HEK293T (cell line): ENCODE measurements at regions of chr17 and their contacts with region 1.

Region 1: GRCh38 chr17:8248751-8249607 is at the start of gene PFAS:
- DNase-seq: peak; percentile 94

Region 2: DNA sequence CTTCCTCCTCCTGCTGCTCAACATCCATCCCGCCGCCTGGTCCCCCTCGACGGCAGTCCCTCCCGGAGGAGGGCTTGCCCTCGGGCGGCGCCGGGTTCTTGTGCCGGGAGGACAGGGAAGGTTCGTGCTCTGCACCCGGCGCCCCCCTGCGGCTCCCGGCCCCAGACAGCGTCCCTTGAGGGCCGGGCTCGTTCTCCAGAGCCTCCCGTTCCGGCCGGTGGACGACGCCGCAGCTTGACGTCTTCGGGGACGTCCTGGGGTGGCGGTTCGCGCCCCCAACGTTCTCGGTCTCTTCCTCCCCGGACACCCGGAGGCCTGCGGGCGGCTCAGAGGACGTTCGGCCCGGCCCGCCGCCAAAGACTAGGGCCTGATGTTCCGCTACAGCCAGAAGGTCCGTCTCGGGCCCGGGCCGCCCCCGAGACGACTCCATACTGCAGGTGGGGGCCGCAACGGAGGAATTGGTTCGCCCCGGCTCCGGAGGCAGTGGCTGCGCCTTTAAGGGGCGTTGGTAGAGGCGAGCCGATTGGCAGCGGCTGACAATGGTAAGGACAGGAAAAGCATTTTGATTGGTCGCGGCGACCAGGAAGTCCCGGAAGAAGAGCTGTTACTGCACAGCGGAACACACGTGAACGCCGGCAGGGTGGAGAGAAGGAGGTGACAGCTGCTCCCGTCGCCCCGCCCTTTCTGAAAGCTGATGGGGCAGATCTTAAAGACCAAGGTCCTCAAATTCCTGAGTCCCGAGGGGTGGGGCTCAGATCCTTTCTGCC is 59.1 kb before region 1 on chr17 and contains the start of gene BORCS6:
- CTCF ChIA-PET with region 1: interaction called, 3 read pairs
- POLR2A ChIA-PET with region 1: interaction called, 27 read pairs
- DNase-seq: peak; percentile 81

Region 3: DNA sequence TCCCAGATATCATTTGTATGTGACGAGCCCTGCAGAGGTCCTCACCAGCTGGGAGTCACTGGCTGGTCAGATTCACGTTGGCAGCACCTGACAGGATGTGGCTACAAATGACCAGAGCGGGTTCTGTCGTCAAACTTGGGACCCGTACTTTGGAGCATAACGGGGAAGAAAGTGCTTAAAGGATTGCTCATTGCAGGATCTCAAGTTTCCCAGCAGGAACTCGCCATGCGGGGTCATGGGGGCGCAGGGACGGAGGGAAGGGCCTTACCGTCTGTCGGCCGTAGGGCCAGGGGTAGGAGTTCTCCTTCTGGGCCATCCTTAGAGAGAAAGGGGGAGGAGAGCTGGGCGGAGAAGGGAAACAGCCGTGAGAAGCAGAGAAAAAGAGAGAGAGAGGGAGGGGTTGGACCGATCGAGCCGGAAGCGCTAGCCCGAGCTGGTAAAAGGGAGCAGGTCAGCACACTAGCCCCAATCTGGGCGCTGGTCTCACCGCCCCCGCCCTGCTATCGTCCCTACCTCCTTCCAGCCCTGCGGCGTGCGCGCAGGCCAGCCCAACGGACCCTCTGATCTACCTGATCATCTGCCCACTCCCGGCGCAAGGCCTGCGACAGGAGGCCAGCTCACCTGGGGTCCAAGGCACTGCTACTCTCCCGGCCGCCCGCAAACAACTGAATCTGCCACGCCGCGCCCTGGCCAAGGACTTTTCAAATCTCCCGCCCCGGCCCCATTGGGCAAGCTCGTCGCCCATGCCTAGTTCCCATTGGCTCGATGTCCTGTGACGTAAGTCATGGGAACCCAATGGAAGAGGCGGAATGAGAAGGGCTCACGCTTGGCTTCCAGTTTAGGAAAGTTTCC is 38.8 kb before region 1 on chr17 and contains the start of gene AURKB:
- CTCF ChIA-PET with region 1: no interaction called
- POLR2A ChIA-PET with region 1: interaction called, 18 read pairs
- DNase-seq: peak; percentile 92

Region 4: GRCh38 chr17:8237175-8237574 is 11.8 kb before region 1 on chr17:
- CTCF ChIA-PET with region 1: no interaction called
- POLR2A ChIA-PET with region 1: interaction called, 13 read pairs
- DNase-seq: no peak

Region 5: GRCh38 chr17:8268550-8269298 is 19.7 kb after region 1 on chr17:
- CTCF ChIA-PET with region 1: no interaction called
- POLR2A ChIA-PET with region 1: interaction called, 13 read pairs
- DNase-seq: no peak

Region 6: DNA sequence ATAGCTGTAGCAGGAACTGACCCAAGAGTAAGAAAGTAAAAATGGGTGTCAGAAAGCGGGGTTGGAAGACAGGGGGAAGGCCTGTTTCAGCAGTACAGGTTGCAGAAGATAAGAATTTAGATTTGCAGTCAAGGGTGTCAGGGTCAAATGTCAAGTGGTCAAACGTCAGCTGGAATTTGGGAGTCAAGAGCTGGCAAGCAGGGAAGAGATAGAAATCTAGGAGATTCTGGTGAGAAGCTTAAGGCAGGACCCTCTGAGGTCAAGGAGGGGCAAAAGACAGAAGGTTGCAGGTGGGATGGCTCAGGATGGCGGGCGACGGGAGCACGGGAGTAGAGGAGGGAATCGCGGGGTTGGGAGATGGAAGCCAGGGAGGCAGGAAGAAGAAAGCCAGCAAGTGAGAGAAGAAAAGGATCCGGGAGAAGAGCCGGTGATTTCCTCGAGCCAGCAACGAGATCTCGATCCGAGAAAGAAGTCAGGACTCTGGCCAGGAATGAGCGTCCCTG is 45.9 kb after region 1 on chr17:
- CTCF ChIA-PET with region 1: no interaction called
- POLR2A ChIA-PET with region 1: interaction called, 52 read pairs
- DNase-seq: no peak

Region 7: GRCh38 chr17:8345052-8345682 is 96.2 kb after region 1 on chr17:
- CTCF ChIA-PET with region 1: no interaction called
- POLR2A ChIA-PET with region 1: no interaction called
- DNase-seq: no peak